ENCODE measurements at regions of chr4 and their contacts with region 1.

Region 1: DNA sequence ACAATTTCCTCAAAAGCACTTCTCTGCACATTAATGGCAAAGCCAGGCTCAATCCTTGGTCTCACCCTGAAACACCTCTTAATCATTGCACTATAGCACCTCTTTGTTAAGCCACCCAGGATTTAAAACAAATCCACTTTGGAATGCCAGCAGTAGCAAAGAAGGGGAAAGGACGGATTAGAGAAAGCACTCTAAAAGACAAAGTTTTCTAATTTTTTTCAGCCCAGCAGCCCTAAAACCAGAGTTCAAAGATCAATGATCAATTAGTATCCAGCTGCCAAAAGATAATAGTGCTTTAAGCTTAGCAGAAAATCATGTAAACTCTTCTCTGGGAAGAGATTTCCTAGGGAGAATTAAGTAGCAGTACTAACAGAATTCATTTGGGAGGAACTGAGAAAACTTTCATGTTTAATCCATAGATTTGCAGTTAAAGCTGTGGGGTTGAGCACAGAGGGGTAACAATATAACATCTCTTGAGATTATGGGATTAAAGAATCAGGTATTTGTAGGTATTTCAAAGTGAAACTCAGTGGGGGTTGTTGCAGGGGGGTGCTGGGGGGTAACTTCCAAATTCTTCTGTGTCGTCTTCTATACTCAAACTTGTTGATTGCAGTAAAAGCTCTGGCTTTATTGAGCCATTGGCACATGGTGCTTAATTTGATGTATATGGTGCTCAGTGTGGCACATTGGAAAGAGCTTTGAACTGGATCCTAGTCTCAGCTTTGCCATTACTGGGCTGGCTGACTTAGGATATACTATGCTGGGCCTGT is 61.8 kb downstream of the LRRC66 start:
- DNase-seq: no peak
- ATAC-seq: no peak
- H3K4me3 ChIP-seq: no peak overlapping the region
- H3K27ac ChIP-seq: no peak overlapping the region
- H3K4me1 ChIP-seq: no peaks in the 10 kb centered on the region
- H3K27me3 ChIP-seq: no peaks in the 10 kb centered on the region; the same call in 1 of the 2 replicates
- CTCF ChIP-seq: no peak
- POLR2A ChIP-seq: no peak
- RAD21 ChIP-seq: no peak

Region 2: DNA sequence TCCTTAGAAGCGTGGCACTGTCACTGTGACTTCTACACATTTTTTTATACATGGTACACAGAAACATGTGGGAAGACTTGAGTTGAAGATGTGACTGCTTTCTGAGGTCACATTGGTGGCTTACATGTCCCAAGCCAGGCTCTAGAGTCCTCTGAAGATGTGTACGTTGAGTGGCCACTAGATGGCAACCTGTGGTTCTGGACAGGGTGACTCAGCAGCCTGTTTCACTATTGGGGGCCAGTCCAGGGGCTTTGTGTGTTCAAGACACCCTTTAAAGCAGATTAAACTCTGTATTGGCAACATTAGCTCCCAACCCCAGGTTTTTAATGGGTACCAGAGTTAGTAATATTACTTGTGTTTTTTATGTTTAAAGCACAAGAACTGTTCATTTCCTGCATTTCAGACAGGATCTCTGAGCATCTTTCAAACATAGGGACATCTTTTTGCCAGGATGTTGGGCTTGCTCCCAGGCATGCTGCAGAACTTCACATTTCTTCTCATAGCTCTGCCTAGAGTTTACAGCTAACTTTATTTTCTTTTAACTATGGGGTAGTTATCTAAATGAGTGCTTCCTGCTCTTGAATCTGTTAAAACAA is 62.5 kb before region 1 on chr4:
- CTCF ChIA-PET with region 1: no interaction called
- POLR2A ChIA-PET with region 1: no interaction called
- dilution Hi-C with region 1: no loop called
- in situ Hi-C with region 1: no loop called
- intact Hi-C with region 1: no loop called
- DNase-seq: peak; percentile 67
- ATAC-seq: peak; percentile 93
- H3K4me3 ChIP-seq: no peak overlapping the region
- H3K27ac ChIP-seq: no peak overlapping the region; the same call in 1 of the 2 replicates
- H3K4me1 ChIP-seq: peaks cover 4% of the 10 kb centered on the region; the same call in 1 of the 2 replicates
- H3K27me3 ChIP-seq: no peaks in the 10 kb centered on the region
- CTCF ChIP-seq: peak; percentile 69
- POLR2A ChIP-seq: no peak
- RAD21 ChIP-seq: peak; percentile 50

Region 3: GRCh38 chr4:51997647-51998046 is 39.3 kb after region 1 on chr4:
- CTCF ChIA-PET with region 1: no interaction called
- POLR2A ChIA-PET with region 1: no interaction called
- dilution Hi-C with region 1: no loop called
- in situ Hi-C with region 1: no loop called
- intact Hi-C with region 1: loop called (anchors 5 kb)
- DNase-seq: no peak
- ATAC-seq: no peak
- H3K4me3 ChIP-seq: no peak overlapping the region
- H3K27ac ChIP-seq: no peak overlapping the region
- H3K4me1 ChIP-seq: peaks cover 2% of the 10 kb centered on the region
- H3K27me3 ChIP-seq: peaks cover 2% of the 10 kb centered on the region; the same call in 1 of the 2 replicates
- CTCF ChIP-seq: no peak
- POLR2A ChIP-seq: no peak
- RAD21 ChIP-seq: no peak

Region 4: GRCh38 chr4:52015366-52015765 is 57.0 kb after region 1 on chr4:
- CTCF ChIA-PET with region 1: no interaction called
- POLR2A ChIA-PET with region 1: no interaction called
- dilution Hi-C with region 1: no loop called
- in situ Hi-C with region 1: no loop called
- intact Hi-C with region 1: loop called (anchors 10 kb)
- DNase-seq: no peak
- ATAC-seq: peak; percentile 37; the same call in 1 of the 2 replicates
- H3K4me3 ChIP-seq: no peak overlapping the region
- H3K27ac ChIP-seq: no peak overlapping the region
- H3K4me1 ChIP-seq: peaks cover 2% of the 10 kb centered on the region
- H3K27me3 ChIP-seq: no peaks in the 10 kb centered on the region
- CTCF ChIP-seq: no peak; the same call in 1 of the 2 replicates
- POLR2A ChIP-seq: no peak
- RAD21 ChIP-seq: peak; percentile 17; the same call in 1 of the 2 replicates